ENCODE measurements at regions of chr21 and their contacts with region 1.

Region 1: GRCh38 chr21:42818328-42818749 is 61.0 kb downstream of the WDR4 start:
- DNase-seq: peak; percentile 79
- H3K4me3 ChIP-seq: no peak overlapping the region
- H3K27ac ChIP-seq: no peak overlapping the region
- H3K4me1 ChIP-seq: no peaks in the 10 kb centered on the region
- H3K27me3 ChIP-seq: peaks cover 0 to 24% (median 6%) of the 10 kb centered on the region in 3 donors
- CTCF ChIP-seq: peak; percentile 77 to 90 (median 84)
- EP300 ChIP-seq: no peak
- POLR2A ChIP-seq: no peak

Region 2: DNA sequence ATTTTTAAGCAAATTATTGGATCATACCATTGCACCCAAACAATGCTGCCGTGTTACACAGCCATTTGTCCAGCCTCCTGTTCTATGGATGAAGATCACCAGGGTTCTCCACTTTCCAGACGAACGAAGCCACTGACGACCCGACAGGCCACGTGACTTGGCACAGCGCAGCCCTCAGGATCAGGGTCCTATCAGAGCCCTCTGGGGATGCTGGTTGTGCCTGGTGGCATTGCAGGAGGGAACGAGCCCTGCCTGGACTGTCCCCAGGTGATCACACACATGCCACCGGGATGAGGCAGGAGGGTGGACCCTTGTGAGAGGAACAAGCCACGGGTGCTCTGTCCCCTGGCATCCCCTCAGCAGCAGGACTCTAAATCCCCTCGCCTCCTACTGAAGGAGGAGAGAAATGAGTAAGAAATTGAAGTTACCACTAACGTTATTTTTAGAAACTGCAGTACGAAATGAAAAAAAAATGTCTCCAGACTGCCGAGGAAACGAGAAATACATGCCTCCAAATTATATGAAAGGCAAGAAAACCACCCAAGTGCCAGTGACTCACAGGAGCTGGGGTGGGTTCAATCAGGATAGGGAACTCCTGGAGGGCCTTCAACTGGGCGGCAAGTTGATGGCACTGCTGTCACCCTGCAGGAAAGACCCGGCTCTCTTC is 223.6 kb before region 1 on chr21:
- intact Hi-C with region 1: loop called (anchors 2 kb)
- DNase-seq: no peak
- H3K4me3 ChIP-seq: no peak overlapping the region
- H3K27ac ChIP-seq: no peak overlapping the region
- H3K4me1 ChIP-seq: peaks cover 0 to 9% (median 9%) of the 10 kb centered on the region in 4 donors
- H3K27me3 ChIP-seq: peaks cover 0 to 6% (median 0%) of the 10 kb centered on the region in 3 donors
- CTCF ChIP-seq: no peak
- EP300 ChIP-seq: no peak
- POLR2A ChIP-seq: no peak

Region 3: DNA sequence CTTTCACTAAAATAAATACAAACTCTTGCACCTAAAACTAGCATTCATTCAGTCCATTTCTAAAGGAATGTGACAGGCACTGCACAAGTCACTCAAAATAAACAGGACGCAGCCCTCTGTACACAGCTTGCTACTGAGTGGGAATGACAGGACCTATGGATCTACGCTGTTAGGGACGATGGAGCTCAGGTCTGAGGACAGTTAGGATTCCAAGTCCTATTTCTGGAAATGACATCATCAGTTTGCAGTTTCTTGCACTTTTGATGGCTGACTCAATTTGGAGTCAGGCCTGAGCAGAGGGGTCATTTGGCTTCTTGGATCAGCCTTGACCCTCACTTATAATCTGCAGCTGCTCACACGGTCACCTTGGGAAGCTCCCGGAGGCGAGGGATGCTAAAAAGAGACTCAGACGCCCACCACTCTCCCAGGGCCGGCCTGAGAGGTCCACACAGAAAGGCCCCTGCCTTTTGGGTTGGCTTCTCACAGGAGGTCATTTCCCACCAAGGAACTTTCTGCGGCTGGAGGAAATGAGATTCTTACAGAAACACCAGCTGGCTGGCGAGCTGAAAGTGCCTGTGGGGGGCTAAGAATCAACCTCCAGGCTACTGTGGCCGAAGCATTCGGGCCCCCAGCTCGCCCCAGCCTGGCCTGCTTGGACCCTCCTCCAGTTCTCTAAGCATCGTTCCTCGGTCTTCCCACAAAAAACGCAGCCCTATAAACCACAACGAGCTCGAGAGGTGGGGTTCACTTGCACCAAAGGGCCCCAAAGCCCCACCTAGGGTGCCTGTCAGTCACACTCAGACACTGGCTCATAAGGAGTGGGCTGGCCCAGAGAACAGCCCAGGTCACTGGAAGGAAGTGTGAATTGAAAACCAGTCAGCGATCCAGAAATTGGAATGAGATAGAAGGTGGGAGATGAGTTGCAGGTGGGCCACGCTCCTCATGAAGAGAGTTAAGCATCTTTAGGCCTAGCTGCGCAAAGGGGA is 173.8 kb before region 1 on chr21:
- intact Hi-C with region 1: loop called (anchors 5 kb)
- DNase-seq: no peak
- H3K4me3 ChIP-seq: no peak overlapping the region
- H3K27ac ChIP-seq: peak overlapping the region in 1 of 4 donors; percentile 1
- H3K4me1 ChIP-seq: peaks cover 0 to 19% (median 17%) of the 10 kb centered on the region in 4 donors
- H3K27me3 ChIP-seq: no peaks in the 10 kb centered on the region
- CTCF ChIP-seq: no peak
- EP300 ChIP-seq: no peak
- POLR2A ChIP-seq: no peak

Region 4: GRCh38 chr21:43025636-43026307 is 207.4 kb after region 1 on chr21:
- intact Hi-C with region 1: no loop called
- DNase-seq: no peak
- H3K4me3 ChIP-seq: no peak overlapping the region
- H3K27ac ChIP-seq: no peak overlapping the region
- H3K4me1 ChIP-seq: no peaks in the 10 kb centered on the region
- H3K27me3 ChIP-seq: no peaks in the 10 kb centered on the region
- CTCF ChIP-seq: no peak
- EP300 ChIP-seq: no peak
- POLR2A ChIP-seq: no peak

Measured in sigmoid colon (tissue), 7 donors.